Activated naive CD8-positive, alpha-beta T cell treated with anti-CD3 and anti-CD28 coated beads, Interleukin-2, amount 10 ng/mL, durations not matched to agents 7 days and 5 days (primary cell): ENCODE measurements at regions of chr19 and their contacts with region 1.

Region 1: DNA sequence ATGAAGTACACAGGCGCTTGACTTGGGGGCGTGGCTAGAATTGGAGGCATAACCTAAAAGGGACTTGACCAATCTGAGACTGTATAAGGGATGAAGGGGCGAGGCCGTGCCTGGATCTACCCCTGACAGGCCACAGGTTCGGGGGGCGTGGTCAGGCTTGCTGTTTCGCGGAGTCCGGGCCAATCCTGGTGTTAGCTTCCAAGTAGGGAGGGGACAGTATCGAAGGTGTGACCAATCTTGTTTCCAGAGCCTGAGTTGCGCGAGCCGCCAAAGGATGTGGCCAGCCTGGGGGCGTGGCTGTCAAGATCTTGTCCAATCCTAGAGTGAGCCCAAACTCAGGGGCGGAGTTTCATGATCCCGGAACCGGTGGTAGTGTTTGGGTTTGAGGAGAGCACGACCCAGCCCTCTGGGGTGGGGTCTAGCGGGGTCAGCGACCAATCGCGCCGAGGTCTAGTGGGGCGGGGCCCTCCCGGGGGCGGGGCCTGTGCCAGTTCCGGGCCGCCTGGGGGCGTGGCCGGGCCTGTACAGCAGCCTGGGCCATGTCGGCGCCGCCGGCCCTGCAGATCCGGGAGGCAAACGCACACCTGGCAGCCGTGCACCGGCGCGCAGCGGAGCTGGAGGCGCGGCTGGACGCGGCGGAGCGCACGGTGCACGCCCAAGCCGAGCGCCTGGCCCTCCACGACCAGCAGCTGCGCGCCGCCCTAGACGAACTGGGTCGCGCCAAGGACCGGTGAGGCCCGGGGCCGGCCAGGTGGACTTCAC is at the start of gene VMAC:
- DNase-seq: peak; percentile 100
- ATAC-seq: peak; percentile 86
- H3K4me3 Mint-ChIP-seq: peak within 1 kb of the TSS; percentile 96
- H3K27ac Mint-ChIP-seq: peak within 1 kb of the TSS; percentile 99
- H3K4me1 Mint-ChIP-seq: peaks cover 21% of the 10 kb centered on the region
- H3K27me3 Mint-ChIP-seq: no peaks in the 10 kb centered on the region
- total RNA-seq, gene VMAC: 15.6 to 17.5 TPM

Region 2: DNA sequence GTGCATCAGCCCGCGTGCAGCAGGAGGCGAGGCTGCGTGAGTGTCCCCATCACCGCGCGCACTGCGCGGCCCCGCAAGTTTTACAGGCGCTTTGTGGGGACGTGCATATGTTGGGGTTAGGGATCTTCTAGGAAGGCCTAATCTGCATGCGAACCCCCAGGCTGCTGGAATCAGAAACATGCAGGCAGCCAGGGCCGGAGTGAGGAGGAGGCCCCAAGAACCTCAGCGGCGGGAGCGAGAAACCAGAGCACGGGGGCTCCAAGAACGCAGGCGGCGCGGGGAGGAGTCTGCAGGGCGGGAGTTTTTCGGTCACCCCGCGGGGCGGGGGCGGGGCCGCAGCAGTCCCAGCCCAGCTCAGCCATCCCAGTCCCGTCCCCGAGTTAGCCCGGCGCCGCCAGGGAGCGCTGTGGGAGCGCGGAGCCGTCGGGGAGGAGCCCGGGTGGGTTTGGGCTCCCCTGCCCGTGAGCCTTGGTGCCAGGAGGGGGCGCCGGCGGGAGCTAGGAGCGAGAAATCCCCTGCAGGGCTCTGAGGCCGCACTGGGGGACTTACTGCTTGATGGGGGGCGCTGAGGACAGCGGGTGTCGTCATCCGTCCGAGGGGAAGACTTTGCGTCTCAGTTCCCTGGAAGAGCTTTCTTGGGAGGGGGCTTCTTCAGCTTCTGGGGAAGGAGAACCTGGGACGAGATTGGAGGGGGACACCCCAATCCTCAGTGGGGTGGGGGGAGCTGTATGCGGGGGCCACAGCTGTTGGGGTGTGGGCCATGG is 100.6 kb before region 1 on chr19:
- POLR2A ChIA-PET with region 1: interaction called, 25 read pairs
- DNase-seq: peak; percentile 99
- ATAC-seq: peak; percentile 96
- H3K4me3 Mint-ChIP-seq: peak overlapping the region; percentile 82
- H3K27ac Mint-ChIP-seq: no peak overlapping the region
- H3K4me1 Mint-ChIP-seq: peaks cover 20% of the 10 kb centered on the region
- H3K27me3 Mint-ChIP-seq: peaks cover 39% of the 10 kb centered on the region

Region 3: DNA sequence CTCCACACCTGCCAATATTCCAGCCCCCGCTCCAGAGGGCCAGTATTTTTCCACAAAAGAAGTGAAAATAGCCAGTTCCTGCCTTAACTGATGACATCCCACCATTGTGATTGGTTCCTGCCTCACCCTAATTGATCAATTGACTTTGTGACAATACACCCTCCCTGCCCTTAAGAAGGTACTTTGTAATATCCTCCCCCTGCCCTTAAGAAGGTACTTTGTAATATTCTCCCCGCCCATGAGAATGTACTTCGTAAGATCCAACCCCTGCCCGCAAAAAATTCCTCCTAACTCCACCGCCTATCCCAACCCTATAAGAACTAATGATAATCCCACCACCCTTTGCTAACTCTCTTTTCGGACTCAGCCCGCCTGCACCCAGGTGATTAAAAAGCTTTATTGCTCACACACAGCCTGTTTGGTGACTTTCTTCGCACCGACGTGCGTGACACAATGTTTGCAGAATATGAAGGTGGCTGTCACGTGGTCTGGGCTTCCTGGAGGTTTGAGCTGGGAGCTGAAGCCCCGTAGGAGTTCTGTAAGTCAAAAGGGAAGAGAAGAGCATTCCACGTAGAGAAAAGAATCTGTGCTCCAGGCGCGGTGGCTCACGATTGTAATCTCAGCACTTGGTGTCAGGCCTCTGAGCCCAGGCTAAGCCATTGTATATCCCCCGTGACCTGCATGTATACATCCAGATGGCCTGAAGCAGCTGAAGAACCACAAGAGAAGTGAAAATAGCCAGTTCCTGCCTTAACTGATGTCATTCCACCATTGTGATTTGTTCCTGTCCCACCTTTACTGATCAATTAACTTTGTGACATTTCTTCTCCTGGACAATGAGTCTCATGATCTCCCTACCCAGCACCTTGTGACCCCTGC is 47.1 kb before region 1 on chr19:
- POLR2A ChIA-PET with region 1: no interaction called
- DNase-seq: no peak
- ATAC-seq: no peak
- H3K4me3 Mint-ChIP-seq: no peak overlapping the region
- H3K27ac Mint-ChIP-seq: no peak overlapping the region
- H3K4me1 Mint-ChIP-seq: peaks cover 6% of the 10 kb centered on the region
- H3K27me3 Mint-ChIP-seq: peaks cover under 1% of the 10 kb centered on the region

Region 4: GRCh38 chr19:5881543-5882299 is 22.8 kb before region 1 on chr19:
- POLR2A ChIA-PET with region 1: no interaction called
- DNase-seq: no peak
- ATAC-seq: no peak
- H3K4me3 Mint-ChIP-seq: no peak overlapping the region
- H3K27ac Mint-ChIP-seq: no peak overlapping the region
- H3K4me1 Mint-ChIP-seq: no peaks in the 10 kb centered on the region
- H3K27me3 Mint-ChIP-seq: peaks cover 12% of the 10 kb centered on the region

Region 5: GRCh38 chr19:5891938-5892771 is 12.4 kb before region 1 on chr19:
- POLR2A ChIA-PET with region 1: interaction called, 15 read pairs
- DNase-seq: peak; percentile 52
- ATAC-seq: peak; percentile 57
- H3K4me3 Mint-ChIP-seq: no peak overlapping the region
- H3K27ac Mint-ChIP-seq: no peak overlapping the region
- H3K4me1 Mint-ChIP-seq: no peaks in the 10 kb centered on the region
- H3K27me3 Mint-ChIP-seq: peaks cover 11% of the 10 kb centered on the region

Region 6: GRCh38 chr19:5961969-5962945 is 57.7 kb after region 1 on chr19:
- POLR2A ChIA-PET with region 1: interaction called, 10 read pairs
- DNase-seq: peak; percentile 71
- ATAC-seq: peak; percentile 94
- H3K4me3 Mint-ChIP-seq: peak overlapping the region; percentile 71
- H3K27ac Mint-ChIP-seq: peak overlapping the region; percentile 95
- H3K4me1 Mint-ChIP-seq: peaks cover 63% of the 10 kb centered on the region
- H3K27me3 Mint-ChIP-seq: no peaks in the 10 kb centered on the region